ENCODE measurements at regions of chr15 and their contacts with region 1.

Region 1: GRCh38 chr15:24901409-24901808 is 53.4 kb upstream of the SNRPN start:
- DNase-seq: no peak
- ATAC-seq: no peak
- H3K4me3 Mint-ChIP-seq: no peak overlapping the region
- H3K27ac Mint-ChIP-seq: no peak overlapping the region
- H3K4me1 Mint-ChIP-seq: no peaks in the 10 kb centered on the region
- H3K27me3 Mint-ChIP-seq: no peaks in the 10 kb centered on the region

Region 2: GRCh38 chr15:23954931-23955330 is 946.5 kb before region 1 on chr15:
- CTCF ChIA-PET with region 1: no interaction called
- POLR2A ChIA-PET with region 1: no interaction called
- intact Hi-C with region 1: no loop called
- DNase-seq: no peak
- ATAC-seq: no peak
- H3K4me3 Mint-ChIP-seq: no peak overlapping the region
- H3K27ac Mint-ChIP-seq: no peak overlapping the region
- H3K4me1 Mint-ChIP-seq: no peaks in the 10 kb centered on the region
- H3K27me3 Mint-ChIP-seq: no peaks in the 10 kb centered on the region

Region 3: GRCh38 chr15:24835301-24835700 is 66.1 kb before region 1 on chr15:
- CTCF ChIA-PET with region 1: no interaction called
- POLR2A ChIA-PET with region 1: no interaction called
- intact Hi-C with region 1: loop called in 1 of 2 experiments (anchors 10 kb)
- DNase-seq: no peak
- ATAC-seq: no peak
- H3K4me3 Mint-ChIP-seq: no peak overlapping the region
- H3K27ac Mint-ChIP-seq: no peak overlapping the region
- H3K4me1 Mint-ChIP-seq: no peaks in the 10 kb centered on the region
- H3K27me3 Mint-ChIP-seq: no peaks in the 10 kb centered on the region

Region 4: GRCh38 chr15:24919446-24919845 is 18.0 kb after region 1 on chr15:
- CTCF ChIA-PET with region 1: no interaction called
- POLR2A ChIA-PET with region 1: no interaction called
- intact Hi-C with region 1: no loop called
- DNase-seq: no peak
- ATAC-seq: no peak
- H3K4me3 Mint-ChIP-seq: no peak overlapping the region
- H3K27ac Mint-ChIP-seq: no peak overlapping the region
- H3K4me1 Mint-ChIP-seq: peaks cover 3% of the 10 kb centered on the region
- H3K27me3 Mint-ChIP-seq: no peaks in the 10 kb centered on the region

Region 5: GRCh38 chr15:25226360-25226759 is 325.0 kb after region 1 on chr15:
- CTCF ChIA-PET with region 1: no interaction called
- POLR2A ChIA-PET with region 1: no interaction called
- intact Hi-C with region 1: no loop called
- DNase-seq: no peak
- ATAC-seq: no peak
- H3K4me3 Mint-ChIP-seq: no peak overlapping the region
- H3K27ac Mint-ChIP-seq: no peak overlapping the region
- H3K4me1 Mint-ChIP-seq: no peaks in the 10 kb centered on the region
- H3K27me3 Mint-ChIP-seq: no peaks in the 10 kb centered on the region